ENCODE measurements at regions of chr4 and their contacts with region 1.

Region 1: DNA sequence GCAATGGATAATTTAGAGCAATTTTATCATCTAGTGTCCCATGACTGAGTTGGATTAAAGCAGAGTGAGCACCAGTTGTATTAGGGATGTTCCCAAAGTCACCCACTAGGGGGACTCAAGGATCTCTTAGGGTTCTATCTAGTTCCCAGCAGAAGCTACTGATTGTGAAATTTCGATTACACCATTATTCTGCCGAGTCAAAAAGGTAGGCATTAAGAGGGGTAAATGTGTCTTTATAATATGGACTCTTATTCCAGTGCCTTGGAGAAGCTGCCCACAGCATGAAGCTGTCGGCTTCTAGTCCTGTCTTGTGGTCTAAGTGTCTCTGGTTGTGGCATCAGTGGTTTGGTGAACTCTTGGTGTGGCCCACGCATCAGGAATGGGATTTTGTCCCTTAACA is 53.3 kb downstream of the RGS12 start:
- DNase-seq: peak; percentile 64 to 89 (median 82)
- H3K4me3 ChIP-seq: no peak overlapping the region
- H3K27ac ChIP-seq: no peak overlapping the region
- H3K4me1 ChIP-seq: peaks cover 4 to 19% (median 13%) of the 10 kb centered on the region in 4 experiments
- H3K27me3 ChIP-seq: no peaks in the 10 kb centered on the region

Region 2: GRCh38 chr4:3363411-3364141 is 17.4 kb after region 1 on chr4:
- CTCF ChIA-PET with region 1: interaction called, 29 read pairs
- POLR2A ChIA-PET with region 1: no interaction called
- DNase-seq: peak in 2 of 3 donors; percentile 30 to 49
- H3K4me3 ChIP-seq: peak overlapping the region in 1 of 7 experiments; percentile 19
- H3K27ac ChIP-seq: no peak overlapping the region
- H3K4me1 ChIP-seq: peaks cover 0 to 31% (median 22%) of the 10 kb centered on the region in 4 experiments
- H3K27me3 ChIP-seq: no peaks in the 10 kb centered on the region

Region 3: GRCh38 chr4:3434891-3435685 is 88.9 kb after region 1 on chr4:
- CTCF ChIA-PET with region 1: interaction called, 117 read pairs
- POLR2A ChIA-PET with region 1: no interaction called
- DNase-seq: no peak
- H3K4me3 ChIP-seq: no peak overlapping the region
- H3K27ac ChIP-seq: no peak overlapping the region
- H3K4me1 ChIP-seq: no peaks in the 10 kb centered on the region
- H3K27me3 ChIP-seq: no peaks in the 10 kb centered on the region

Region 4: GRCh38 chr4:3442959-3443749 is 97.0 kb after region 1 on chr4:
- CTCF ChIA-PET with region 1: interaction called, 117 read pairs
- POLR2A ChIA-PET with region 1: no interaction called
- DNase-seq: peak; percentile 36 to 64 (median 64)
- H3K4me3 ChIP-seq: no peak overlapping the region
- H3K27ac ChIP-seq: no peak overlapping the region
- H3K4me1 ChIP-seq: peaks cover 0 to 8% (median 2%) of the 10 kb centered on the region in 4 experiments
- H3K27me3 ChIP-seq: no peaks in the 10 kb centered on the region

Region 5: DNA sequence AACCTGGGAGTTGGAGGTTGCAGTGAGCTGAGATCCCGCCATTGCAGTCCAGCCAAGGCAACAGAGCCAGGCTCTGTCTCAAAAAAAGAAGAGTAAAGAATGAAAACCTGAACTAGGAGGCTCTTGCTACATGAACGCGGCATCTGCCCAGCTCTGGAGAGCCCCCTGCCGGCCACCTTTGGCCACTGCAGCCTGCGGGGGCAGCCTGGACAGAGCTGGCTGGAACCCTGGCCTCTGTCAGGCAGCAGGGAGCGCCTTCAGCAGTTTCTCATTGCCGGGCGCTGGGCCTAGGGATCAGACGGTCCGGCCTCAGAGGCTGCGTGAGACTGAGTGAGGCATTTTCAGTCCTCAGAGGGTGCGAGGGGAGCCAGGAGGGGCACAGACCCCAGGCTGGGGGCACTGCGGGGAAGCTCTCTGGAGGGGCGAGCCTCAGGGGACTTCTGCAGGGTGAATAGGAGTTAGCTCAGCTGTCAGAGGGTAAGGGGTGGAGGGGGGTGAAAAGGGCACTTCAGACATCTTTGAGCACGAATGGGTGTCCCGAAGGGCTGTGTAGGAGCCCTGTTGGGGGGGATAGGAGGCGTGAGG is 134.5 kb after region 1 on chr4:
- CTCF ChIA-PET with region 1: interaction called, 24 read pairs
- POLR2A ChIA-PET with region 1: no interaction called
- DNase-seq: peak; percentile 43 to 71 (median 66)
- H3K4me3 ChIP-seq: no peak overlapping the region
- H3K27ac ChIP-seq: no peak overlapping the region
- H3K4me1 ChIP-seq: peaks cover 0 to 19% (median 14%) of the 10 kb centered on the region in 4 experiments
- H3K27me3 ChIP-seq: peaks cover 0 to 49% (median 11%) of the 10 kb centered on the region in 5 experiments